A549 (cell line): ENCODE measurements at regions of chr7 and their contacts with region 1.

Region 1: GRCh38 chr7:143901668-143902331 is at the start of gene TCAF1:
- DNase-seq: peak; percentile 92 to 97
- ATAC-seq: peak; percentile 96 to 98
- H3K4me3 ChIP-seq: peak within 1 kb of the TSS; percentile 88
- H3K27ac ChIP-seq: peak within 1 kb of the TSS; percentile 93 to 95
- H3K4me1 ChIP-seq: peaks cover 21% of the 10 kb centered on the region
- CTCF ChIP-seq: peak; percentile 48
- EP300 ChIP-seq: no peak
- POLR2A ChIP-seq: peak; percentile 70
- RAD21 ChIP-seq: peak; percentile 32 to 58; a peak in 4 of 5 replicates
- polyA plus RNA-seq, gene TCAF1: 32.7 and 33.5 TPM in 2 replicates

Region 2: DNA sequence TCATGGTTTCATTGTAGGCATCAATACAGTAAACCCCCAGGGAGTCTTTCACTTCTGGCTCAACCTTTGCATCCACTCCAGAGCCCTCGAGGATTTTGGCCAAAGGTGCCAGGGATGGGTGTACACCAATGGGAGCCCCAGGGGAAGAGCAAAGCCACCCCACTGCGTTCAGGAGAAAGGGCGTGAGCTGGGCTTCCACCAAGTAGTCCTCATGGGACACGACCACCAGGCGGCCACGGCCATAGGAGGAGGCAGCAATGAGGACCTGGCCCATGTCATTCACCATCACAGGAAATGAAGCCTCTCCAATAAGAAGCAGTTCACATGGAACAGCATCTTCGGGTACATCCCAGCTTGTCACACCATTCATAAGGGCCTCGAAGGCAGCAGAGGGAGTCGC is 25.6 kb before region 1 on chr7:
- CTCF ChIA-PET with region 1: no interaction called
- POLR2A ChIA-PET with region 1: no interaction called
- DNase-seq: no peak
- ATAC-seq: peak in 1 of 2 experiments; percentile 20; a peak in 1 of 6 replicates
- H3K4me3 ChIP-seq: no peak overlapping the region
- H3K27ac ChIP-seq: no peak overlapping the region
- H3K4me1 ChIP-seq: no peaks in the 10 kb centered on the region
- CTCF ChIP-seq: no peak
- EP300 ChIP-seq: no peak
- POLR2A ChIP-seq: no peak
- RAD21 ChIP-seq: no peak

Region 3: DNA sequence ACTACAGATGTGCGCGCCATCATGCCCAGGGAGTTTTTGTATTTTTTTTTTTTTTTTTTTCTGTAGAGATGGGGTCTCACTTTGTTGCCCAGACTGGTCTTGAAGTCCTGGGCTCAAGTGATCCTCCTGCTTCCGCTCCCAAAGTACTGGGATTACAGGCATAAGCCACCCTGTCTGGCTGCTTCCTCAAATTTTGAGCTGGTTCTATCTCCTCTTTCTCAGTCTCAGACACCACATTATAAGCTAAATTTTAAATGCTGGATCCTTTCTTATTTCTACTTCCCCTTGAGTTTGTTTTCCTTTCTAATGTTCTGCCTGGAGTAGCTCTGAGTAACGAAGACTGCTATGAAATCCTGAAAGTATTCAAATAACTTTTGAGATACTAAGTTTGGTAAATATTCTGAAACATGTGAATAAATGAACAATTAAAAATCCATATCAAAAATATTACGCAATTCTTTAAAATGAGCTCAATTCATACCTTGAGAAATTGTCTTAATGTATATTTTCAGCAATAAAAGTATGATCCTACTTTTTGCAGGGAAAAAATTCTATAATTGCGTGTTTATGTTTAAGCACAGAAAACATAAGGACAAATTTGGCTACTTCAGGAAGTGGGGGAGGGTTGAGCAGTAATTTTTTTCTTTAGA is 14.8 kb before region 1 on chr7:
- CTCF ChIA-PET with region 1: interaction called, 5 read pairs
- POLR2A ChIA-PET with region 1: interaction called, 10 read pairs
- DNase-seq: no peak
- ATAC-seq: no peak
- H3K4me3 ChIP-seq: no peak overlapping the region
- H3K27ac ChIP-seq: no peak overlapping the region
- H3K4me1 ChIP-seq: no peaks in the 10 kb centered on the region
- CTCF ChIP-seq: no peak
- EP300 ChIP-seq: no peak
- POLR2A ChIP-seq: no peak
- RAD21 ChIP-seq: no peak

Region 4: DNA sequence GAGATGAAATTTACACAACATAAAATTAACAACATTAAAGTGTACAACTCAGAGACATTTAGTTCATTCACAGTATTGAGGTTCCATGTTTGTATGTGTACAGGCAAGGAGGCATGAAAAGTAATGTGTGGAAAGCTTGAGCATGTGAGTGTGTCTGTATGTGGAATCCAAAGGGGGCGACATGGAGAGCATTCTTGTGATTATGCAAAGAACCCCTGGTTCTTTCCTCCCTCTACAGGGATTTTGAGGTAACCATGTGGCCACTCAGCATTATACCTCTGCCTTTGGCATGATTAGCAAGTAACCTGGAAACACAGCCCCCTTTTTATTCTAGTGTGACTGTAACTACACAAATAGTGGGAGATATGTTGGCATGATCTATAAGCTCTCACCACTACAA is 73.8 kb after region 1 on chr7:
- CTCF ChIA-PET with region 1: interaction called, 3 read pairs
- POLR2A ChIA-PET with region 1: interaction called, 27 read pairs
- DNase-seq: peak; percentile 9 to 48
- ATAC-seq: peak; percentile 47 to 52; a peak in 3 of 6 replicates
- H3K4me3 ChIP-seq: no peak overlapping the region
- H3K27ac ChIP-seq: peak overlapping the region; percentile 55 to 68; a peak in 3 of 6 replicates
- H3K4me1 ChIP-seq: peaks cover 47% of the 10 kb centered on the region
- CTCF ChIP-seq: no peak
- EP300 ChIP-seq: no peak
- POLR2A ChIP-seq: no peak
- RAD21 ChIP-seq: no peak

Region 5: GRCh38 chr7:144011458-144012230 is 109.8 kb after region 1 on chr7:
- CTCF ChIA-PET with region 1: interaction called, 17 read pairs
- POLR2A ChIA-PET with region 1: interaction called, 9 read pairs
- DNase-seq: peak; percentile 2 to 49
- ATAC-seq: peak; percentile 56 to 87; a peak in 5 of 6 replicates
- H3K4me3 ChIP-seq: no peak overlapping the region
- H3K27ac ChIP-seq: no peak overlapping the region
- H3K4me1 ChIP-seq: no peaks in the 10 kb centered on the region
- CTCF ChIP-seq: peak; percentile 54
- EP300 ChIP-seq: no peak
- POLR2A ChIP-seq: no peak
- RAD21 ChIP-seq: peak; percentile 73 to 75

Region 6: GRCh38 chr7:144674550-144674949 is 772.8 kb after region 1 on chr7:
- CTCF ChIA-PET with region 1: no interaction called
- POLR2A ChIA-PET with region 1: no interaction called
- DNase-seq: no peak
- ATAC-seq: no peak
- H3K4me3 ChIP-seq: no peak overlapping the region
- H3K27ac ChIP-seq: no peak overlapping the region
- H3K4me1 ChIP-seq: no peaks in the 10 kb centered on the region
- CTCF ChIP-seq: no peak
- EP300 ChIP-seq: no peak
- POLR2A ChIP-seq: no peak
- RAD21 ChIP-seq: no peak